ENCODE measurements at regions of chr1 and their contacts with region 1.

Region 1: DNA sequence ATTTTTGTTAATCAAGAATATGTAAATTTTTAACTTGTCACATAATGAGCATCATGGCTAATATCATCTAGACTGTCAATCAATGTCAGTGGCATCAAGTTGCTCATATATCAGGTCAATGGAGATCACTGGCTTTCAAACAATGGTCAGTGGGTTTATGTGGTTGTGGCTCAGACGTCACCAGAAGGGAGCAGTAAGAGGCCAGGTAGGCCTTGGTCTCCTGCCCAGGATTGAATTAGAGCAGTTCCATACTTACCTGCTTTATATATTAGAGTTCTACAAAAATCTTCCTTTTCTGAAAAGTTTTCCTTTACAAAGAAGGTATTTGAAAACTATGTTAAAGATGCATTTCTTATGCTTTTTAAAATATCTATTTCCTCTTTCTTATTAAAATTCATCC is 206.3 kb upstream of the B3GALT2 start:
- DNase-seq: no peak
- ATAC-seq: no peak
- H3K4me3 ChIP-seq: no peak overlapping the region
- H3K27ac ChIP-seq: no peak overlapping the region
- H3K4me1 ChIP-seq: no peaks in the 10 kb centered on the region
- H3K27me3 ChIP-seq: no peaks in the 10 kb centered on the region
- CTCF ChIP-seq: no peak
- POLR2A ChIP-seq: no peak
- RAD21 ChIP-seq: no peak

Region 2: DNA sequence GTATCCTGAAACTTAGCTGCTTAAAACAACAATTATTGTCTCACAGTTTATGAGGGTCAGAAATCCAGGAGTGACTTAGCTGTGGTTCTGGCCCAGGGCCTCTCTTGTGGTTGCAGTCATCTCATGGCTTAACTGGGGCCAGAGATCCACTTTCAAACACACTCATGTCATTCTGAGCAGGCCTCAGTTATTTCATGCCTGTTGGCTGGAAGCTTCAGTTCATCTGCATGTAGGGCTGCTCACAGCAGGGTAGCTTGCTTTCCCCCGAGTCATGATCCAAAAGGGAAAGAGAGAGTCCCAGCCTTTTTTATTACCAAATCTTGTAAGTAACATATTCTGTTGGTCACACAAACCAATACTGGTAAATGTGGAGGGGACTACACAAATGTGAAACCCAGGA is 109.7 kb before region 1 on chr1:
- CTCF ChIA-PET with region 1: no interaction called
- POLR2A ChIA-PET with region 1: no interaction called
- dilution Hi-C with region 1: no loop called
- in situ Hi-C with region 1: no loop called
- intact Hi-C with region 1: loop called (anchors 10 kb)
- DNase-seq: peak; percentile 65
- ATAC-seq: peak; percentile 74
- H3K4me3 ChIP-seq: no peak overlapping the region
- H3K27ac ChIP-seq: peak overlapping the region; percentile 29; the same call in 1 of the 2 replicates
- H3K4me1 ChIP-seq: peaks cover 4% of the 10 kb centered on the region
- H3K27me3 ChIP-seq: no peaks in the 10 kb centered on the region
- CTCF ChIP-seq: no peak
- POLR2A ChIP-seq: no peak
- RAD21 ChIP-seq: no peak

Measured in IMR-90 (cell line).